Activated naive CD4-positive, alpha-beta T cell treated with anti-CD3 and anti-CD28 coated beads for 36 hours (primary cell): ENCODE measurements at regions of chr7 and their contacts with region 1.

Region 1: DNA sequence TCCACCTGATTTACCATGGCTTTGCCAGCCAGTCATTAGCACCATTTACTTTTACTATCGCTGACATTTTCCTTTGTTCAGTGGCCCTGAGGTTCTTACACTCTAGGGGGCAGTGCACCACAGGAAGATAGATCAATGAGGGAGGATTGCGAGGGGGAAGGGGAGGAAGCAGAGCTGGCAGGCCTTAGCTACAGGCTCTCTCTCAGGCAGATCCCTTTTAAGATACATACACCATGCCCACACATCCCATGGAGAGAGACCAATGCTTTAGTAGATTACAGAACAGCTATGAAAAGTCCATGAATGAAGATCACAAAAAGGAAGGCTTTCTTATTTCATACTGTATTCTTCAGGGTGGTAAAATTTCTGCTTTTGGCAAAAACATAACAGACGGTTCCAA is 47.4 kb downstream of the DENND11 start:
- DNase-seq: peak; percentile 84
- H3K4me3 Mint-ChIP-seq: no peak overlapping the region
- H3K27ac Mint-ChIP-seq: peak overlapping the region; percentile 68
- H3K4me1 Mint-ChIP-seq: peaks cover 6% of the 10 kb centered on the region
- H3K27me3 Mint-ChIP-seq: no peaks in the 10 kb centered on the region

Region 2: GRCh38 chr7:141563956-141564631 is 90.5 kb before region 1 on chr7:
- CTCF ChIA-PET with region 1: no interaction called
- intact Hi-C with region 1: loop called (anchors 2 kb)
- DNase-seq: peak; percentile 70
- H3K4me3 Mint-ChIP-seq: no peak overlapping the region
- H3K27ac Mint-ChIP-seq: peak overlapping the region; percentile 35
- H3K4me1 Mint-ChIP-seq: peaks cover 55% of the 10 kb centered on the region
- H3K27me3 Mint-ChIP-seq: no peaks in the 10 kb centered on the region

Region 3: DNA sequence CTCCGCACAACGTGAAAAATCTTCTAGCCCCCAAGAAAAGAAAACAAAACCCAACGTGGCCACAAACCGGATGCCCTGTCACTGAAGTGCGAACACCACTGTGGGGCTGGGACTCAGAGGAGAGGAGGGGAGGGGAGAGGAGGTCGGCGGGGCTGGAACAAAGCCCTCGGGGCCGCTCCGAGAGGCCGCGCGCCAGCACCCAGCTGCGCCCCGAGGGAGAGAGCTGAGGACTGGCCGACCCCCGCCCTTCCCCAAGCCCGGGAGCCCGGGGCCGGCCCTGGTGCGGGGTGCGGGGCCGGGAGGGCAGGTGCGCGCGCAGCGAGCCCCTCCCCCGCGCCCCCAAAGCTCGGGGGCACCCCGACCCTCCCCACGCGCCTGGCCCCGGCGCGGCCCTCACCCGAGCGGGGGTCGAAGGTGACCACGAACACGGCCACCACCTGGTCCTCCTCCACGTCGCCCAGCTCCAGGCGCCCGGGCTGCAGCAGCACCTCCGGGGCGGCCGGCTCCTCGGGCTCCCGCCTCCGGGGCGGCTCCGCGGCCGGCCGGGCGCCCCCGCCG is 47.0 kb after region 1 on chr7:
- CTCF ChIA-PET with region 1: interaction called, 9 read pairs
- intact Hi-C with region 1: loop called (anchors 1 kb)
- DNase-seq: peak; percentile 83
- H3K4me3 Mint-ChIP-seq: peak overlapping the region; percentile 76
- H3K27ac Mint-ChIP-seq: peak overlapping the region; percentile 39
- H3K4me1 Mint-ChIP-seq: peaks cover 45% of the 10 kb centered on the region
- H3K27me3 Mint-ChIP-seq: peaks cover 5% of the 10 kb centered on the region

Region 4: GRCh38 chr7:141785706-141786552 is 131.4 kb after region 1 on chr7:
- CTCF ChIA-PET with region 1: interaction called, 36 read pairs
- intact Hi-C with region 1: loop called (anchors 1 kb)
- DNase-seq: peak; percentile 33
- H3K4me3 Mint-ChIP-seq: no peak overlapping the region
- H3K27ac Mint-ChIP-seq: no peak overlapping the region
- H3K4me1 Mint-ChIP-seq: no peaks in the 10 kb centered on the region
- H3K27me3 Mint-ChIP-seq: no peaks in the 10 kb centered on the region

Region 5: DNA sequence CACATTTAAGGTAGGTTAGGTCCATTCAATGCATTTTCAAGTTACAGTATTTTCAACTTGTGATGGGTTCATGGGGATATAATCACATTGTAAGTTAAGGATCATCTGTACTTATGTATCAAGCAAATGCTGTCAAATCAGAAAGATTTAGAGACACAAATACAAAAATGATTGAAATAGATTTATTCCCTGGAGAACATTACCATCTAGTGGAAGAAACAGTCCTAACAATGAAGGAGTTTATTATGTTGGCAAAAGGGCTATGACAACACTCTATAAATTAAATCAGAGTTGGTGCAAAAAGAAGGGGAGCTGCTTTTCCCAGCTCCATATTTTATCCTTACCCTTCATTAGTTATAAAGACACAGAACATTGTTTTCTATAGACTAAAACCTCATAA is 534.3 kb after region 1 on chr7:
- CTCF ChIA-PET with region 1: no interaction called
- intact Hi-C with region 1: loop called (anchors 2 kb)
- DNase-seq: no peak
- H3K4me3 Mint-ChIP-seq: no peak overlapping the region
- H3K27ac Mint-ChIP-seq: no peak overlapping the region
- H3K4me1 Mint-ChIP-seq: peaks cover 2% of the 10 kb centered on the region
- H3K27me3 Mint-ChIP-seq: peaks cover 5% of the 10 kb centered on the region